ENCODE measurements at regions of chr2 and their contacts with region 1.

Region 1: GRCh38 chr2:115034801-115035200 is 592.4 kb downstream of the DPP10 start:
- DNase-seq: no peak
- ATAC-seq: no peak
- H3K4me3 ChIP-seq: no peak overlapping the region
- H3K27ac ChIP-seq: no peak overlapping the region
- H3K4me1 ChIP-seq: no peaks in the 10 kb centered on the region
- H3K27me3 ChIP-seq: no peaks in the 10 kb centered on the region
- CTCF ChIP-seq: no peak

Region 2: DNA sequence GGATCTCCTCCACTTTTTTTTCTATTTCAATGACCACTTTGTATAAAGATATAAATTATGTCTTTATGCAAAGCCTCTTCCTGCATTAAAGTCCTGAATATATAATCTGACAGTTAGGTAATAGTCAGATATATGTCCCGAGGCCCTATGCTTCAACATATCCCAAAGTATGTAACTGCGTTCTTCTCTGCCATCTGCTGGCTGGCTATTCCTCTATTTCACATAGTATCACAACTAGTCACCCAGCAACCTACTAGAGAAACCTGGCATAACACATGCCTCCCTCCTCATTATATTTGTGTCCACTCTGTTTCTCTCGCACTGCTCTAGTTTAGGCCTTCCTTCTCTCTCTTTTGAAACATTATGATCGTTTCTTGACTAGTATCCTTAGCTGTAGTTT is 48.4 kb after region 1 on chr2:
- CTCF ChIA-PET with region 1: no interaction called
- POLR2A ChIA-PET with region 1: interaction called, 26 read pairs
- intact Hi-C with region 1: no loop called
- DNase-seq: peak; percentile 33
- ATAC-seq: peak; percentile 55
- H3K4me3 ChIP-seq: no peak overlapping the region
- H3K27ac ChIP-seq: no peak overlapping the region
- H3K4me1 ChIP-seq: no peaks in the 10 kb centered on the region
- H3K27me3 ChIP-seq: no peaks in the 10 kb centered on the region
- CTCF ChIP-seq: peak; percentile 39; the same call in 1 of the 2 replicates